CD4-positive, alpha-beta memory T cell (primary cell): ENCODE measurements at regions of chr12 and their contacts with region 1.

Region 1: DNA sequence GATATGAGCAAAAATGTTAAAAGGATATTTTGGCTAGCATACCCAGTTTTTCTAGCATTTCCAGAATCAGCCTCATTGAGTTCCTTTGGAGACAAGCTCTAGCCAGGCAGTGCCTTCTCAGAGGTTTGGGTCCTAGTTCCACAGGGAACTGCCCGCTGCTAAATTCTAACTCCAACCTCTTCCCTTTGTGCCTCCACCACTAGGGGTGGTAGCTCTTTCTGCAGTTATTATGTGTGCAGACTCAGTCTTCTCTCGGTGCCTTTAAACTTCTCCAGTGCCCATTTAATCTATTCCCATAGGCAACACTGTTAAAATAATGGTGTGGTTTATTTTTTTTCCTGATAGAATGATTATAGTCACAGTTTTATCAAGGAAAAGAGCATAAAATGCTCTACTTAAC is 21.5 kb upstream of the SLC25A3 start:
- DNase-seq: no peak
- H3K4me3 ChIP-seq: no peak overlapping the region
- H3K4me3 Mint-ChIP-seq: no peak overlapping the region
- H3K27ac ChIP-seq: no peak overlapping the region
- H3K27ac Mint-ChIP-seq: no peak overlapping the region
- H3K4me1 ChIP-seq: no peaks in the 10 kb centered on the region
- H3K4me1 Mint-ChIP-seq: peaks cover 0 to 2% (median under 1%) of the 10 kb centered on the region in 4 donors
- H3K27me3 ChIP-seq: no peaks in the 10 kb centered on the region
- H3K27me3 Mint-ChIP-seq: peaks cover 0 to 2% of the 10 kb centered on the region in 2 donors

Region 2: DNA sequence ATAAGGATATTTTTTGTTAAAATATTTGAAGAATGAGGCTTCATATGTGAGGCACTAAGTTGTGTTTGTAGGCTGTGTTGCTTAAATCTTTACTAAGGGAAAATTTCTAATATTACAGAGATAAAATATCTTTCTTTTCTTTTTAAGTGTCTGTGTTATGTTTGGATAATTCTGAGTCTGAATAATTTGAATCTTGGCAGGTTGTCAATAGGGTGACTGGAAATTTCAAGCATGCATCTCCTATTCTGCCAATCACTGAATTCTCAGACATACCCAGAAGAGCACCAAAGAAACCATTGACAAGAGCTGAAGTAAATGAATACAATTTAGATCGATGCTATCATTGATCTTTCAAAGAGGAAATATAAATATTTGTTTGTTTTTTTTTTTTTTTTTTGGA is 27.3 kb before region 1 on chr12:
- CTCF ChIA-PET with region 1: interaction called, 11 read pairs
- POLR2A ChIA-PET with region 1: no interaction called
- intact Hi-C with region 1: no loop called
- DNase-seq: no peak
- H3K4me3 ChIP-seq: no peak overlapping the region
- H3K4me3 Mint-ChIP-seq: no peak overlapping the region
- H3K27ac ChIP-seq: no peak overlapping the region
- H3K27ac Mint-ChIP-seq: no peak overlapping the region
- H3K4me1 ChIP-seq: no peaks in the 10 kb centered on the region
- H3K4me1 Mint-ChIP-seq: peaks cover 0 to 9% (median 6%) of the 10 kb centered on the region in 4 donors
- H3K27me3 ChIP-seq: no peaks in the 10 kb centered on the region
- H3K27me3 Mint-ChIP-seq: no peaks in the 10 kb centered on the region

Region 3: DNA sequence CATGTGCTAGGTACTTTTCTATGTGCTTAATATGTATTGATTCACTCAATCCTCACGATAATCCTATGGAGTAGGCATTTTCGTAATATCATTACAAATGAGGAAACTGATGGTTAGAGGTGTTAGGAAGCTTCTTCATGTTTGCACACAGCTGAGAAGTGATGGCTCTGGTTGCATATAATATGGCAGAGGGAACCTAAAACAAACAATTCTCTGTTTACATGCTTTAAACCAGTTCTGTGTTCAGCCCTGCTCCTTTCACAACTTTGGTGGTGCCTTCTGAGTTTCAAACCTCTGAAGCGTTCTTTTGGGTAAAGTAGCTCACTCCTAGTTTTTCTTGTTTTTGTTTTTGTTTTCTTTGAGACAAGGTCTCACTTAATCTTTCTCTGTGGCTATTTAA is 21.2 kb before region 1 on chr12:
- CTCF ChIA-PET with region 1: interaction called, 10 read pairs
- POLR2A ChIA-PET with region 1: no interaction called
- intact Hi-C with region 1: no loop called
- DNase-seq: no peak
- H3K4me3 ChIP-seq: no peak overlapping the region
- H3K4me3 Mint-ChIP-seq: no peak overlapping the region
- H3K27ac ChIP-seq: no peak overlapping the region
- H3K27ac Mint-ChIP-seq: no peak overlapping the region
- H3K4me1 ChIP-seq: no peaks in the 10 kb centered on the region
- H3K4me1 Mint-ChIP-seq: peaks cover 0 to 3% (median under 1%) of the 10 kb centered on the region in 4 donors
- H3K27me3 ChIP-seq: no peaks in the 10 kb centered on the region
- H3K27me3 Mint-ChIP-seq: no peaks in the 10 kb centered on the region

Region 4: GRCh38 chr12:98644711-98645402 is 72.8 kb after region 1 on chr12 and contains the starts of genes APAF1 and IKBIP:
- CTCF ChIA-PET with region 1: interaction called, 142 read pairs
- POLR2A ChIA-PET with region 1: no interaction called
- intact Hi-C with region 1: no loop called
- DNase-seq: peak; percentile 94 to 98 (median 96)
- H3K4me3 ChIP-seq: peak within 1 kb of the TSS; percentile 92 to 93
- H3K4me3 Mint-ChIP-seq: peak within 1 kb of the TSS; percentile 97 to 99 (median 98)
- H3K27ac ChIP-seq: peak within 1 kb of the TSS; percentile 73
- H3K27ac Mint-ChIP-seq: peak within 1 kb of the TSS; percentile 82 to 97 (median 96)
- H3K4me1 ChIP-seq: peaks cover 24% of the 10 kb centered on the region
- H3K4me1 Mint-ChIP-seq: peaks cover 14 to 40% (median 20%) of the 10 kb centered on the region in 4 donors
- H3K27me3 ChIP-seq: no peaks in the 10 kb centered on the region
- H3K27me3 Mint-ChIP-seq: no peaks in the 10 kb centered on the region
- total RNA-seq, gene APAF1: 30.8 to 32.2 TPM
- total RNA-seq, gene IKBIP: 7.7 to 8.2 TPM

Region 5: DNA sequence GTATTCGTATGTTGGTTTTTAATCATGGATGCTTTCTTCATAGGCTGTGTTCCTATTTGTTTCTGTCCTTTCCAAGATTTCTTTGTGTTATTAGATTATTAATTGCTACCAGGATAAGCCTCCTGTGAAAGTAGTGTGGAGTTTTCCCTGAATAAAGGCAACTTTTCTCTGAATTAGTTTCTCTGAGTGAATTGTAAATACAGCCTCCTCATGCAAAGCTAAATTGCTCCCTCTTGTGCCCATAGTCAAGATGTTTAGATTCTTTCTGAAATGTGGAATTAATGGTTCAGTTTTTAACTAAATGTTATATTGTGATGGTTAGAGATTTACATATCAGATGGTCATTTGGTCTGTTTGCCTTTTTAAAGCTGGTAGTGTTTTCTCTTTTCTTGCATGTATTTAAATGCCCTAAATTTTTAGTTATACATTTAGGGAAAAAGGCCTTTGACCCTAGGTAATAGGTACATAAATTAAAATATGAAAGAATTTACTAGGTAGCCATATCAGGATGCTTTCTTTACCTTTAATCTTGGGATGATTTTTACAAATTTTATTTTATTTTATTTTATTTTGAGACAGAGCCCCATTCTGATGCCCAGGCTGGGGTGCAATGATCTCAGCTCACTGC is 82.0 kb after region 1 on chr12:
- CTCF ChIA-PET with region 1: interaction called, 142 read pairs
- POLR2A ChIA-PET with region 1: no interaction called
- intact Hi-C with region 1: loop called (anchors 1 kb)
- DNase-seq: peak in 4 of 5 donors; percentile 48 to 61 (median 56)
- H3K4me3 ChIP-seq: no peak overlapping the region
- H3K4me3 Mint-ChIP-seq: no peak overlapping the region
- H3K27ac ChIP-seq: no peak overlapping the region
- H3K27ac Mint-ChIP-seq: no peak overlapping the region
- H3K4me1 ChIP-seq: peaks cover 7% of the 10 kb centered on the region
- H3K4me1 Mint-ChIP-seq: peaks cover 12 to 22% (median 15%) of the 10 kb centered on the region in 4 donors
- H3K27me3 ChIP-seq: no peaks in the 10 kb centered on the region
- H3K27me3 Mint-ChIP-seq: no peaks in the 10 kb centered on the region